Right cardiac atrium (tissue), 5 donors: ENCODE measurements at regions of chr1 and their contacts with region 1.

Region 1: DNA sequence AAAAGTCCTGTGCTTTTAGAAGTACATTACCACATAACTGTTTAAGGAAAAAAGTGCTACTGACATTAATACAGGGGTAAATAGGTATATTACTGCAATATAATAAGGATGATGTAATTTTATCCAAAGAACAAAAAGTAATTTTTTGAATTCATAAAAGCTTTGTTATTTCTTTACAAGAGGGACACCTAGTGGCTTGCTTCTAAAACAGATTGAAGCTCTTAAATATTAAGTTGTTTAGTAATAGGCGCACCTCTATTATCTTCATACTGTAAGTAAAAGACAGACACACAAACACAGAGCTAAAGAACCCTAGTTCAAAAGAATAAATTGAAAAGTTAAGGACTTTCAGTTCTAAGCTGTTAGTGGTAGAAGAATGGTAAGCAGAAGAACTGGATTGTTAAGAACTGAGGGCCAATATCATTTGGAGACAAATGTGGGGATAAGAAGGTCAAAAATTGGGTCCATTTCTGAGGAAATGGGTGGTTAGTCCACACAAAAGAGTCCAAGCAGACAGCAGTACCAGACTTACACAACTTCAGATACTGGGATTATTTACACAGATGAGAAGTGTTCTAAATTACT is 15.4 kb downstream of the ZNHIT6 start:
- DNase-seq: no peak
- ATAC-seq: no peak
- H3K4me3 ChIP-seq: no peak overlapping the region
- H3K27ac ChIP-seq: no peak overlapping the region
- H3K4me1 ChIP-seq: no peaks in the 10 kb centered on the region
- H3K27me3 ChIP-seq: no peaks in the 10 kb centered on the region

Region 2: DNA sequence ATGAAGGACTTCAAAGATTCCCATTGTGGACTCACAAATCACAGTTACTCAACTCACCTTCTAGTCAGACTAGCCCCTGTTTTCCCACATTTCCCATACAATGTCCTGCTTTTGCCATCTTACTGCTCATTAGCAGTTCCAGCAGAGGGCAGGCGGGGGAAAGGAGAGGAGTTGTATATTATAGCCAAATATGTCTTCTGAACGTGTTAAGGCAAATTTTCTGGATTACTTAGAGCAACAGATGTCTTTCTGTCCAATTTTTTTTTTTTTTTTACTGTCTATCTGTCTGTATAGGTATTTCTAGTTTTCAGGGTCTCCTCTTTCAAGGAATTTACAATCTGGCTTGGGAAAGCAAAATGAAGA is 197.9 kb before region 1 on chr1:
- intact Hi-C with region 1: loop called in 2 of 4 experiments (anchors 10 kb)
- DNase-seq: peak in 1 of 3 donors; percentile 45
- ATAC-seq: no peak
- H3K4me3 ChIP-seq: no peak overlapping the region
- H3K27ac ChIP-seq: no peak overlapping the region
- H3K4me1 ChIP-seq: no peaks in the 10 kb centered on the region
- H3K27me3 ChIP-seq: no peaks in the 10 kb centered on the region

Region 3: DNA sequence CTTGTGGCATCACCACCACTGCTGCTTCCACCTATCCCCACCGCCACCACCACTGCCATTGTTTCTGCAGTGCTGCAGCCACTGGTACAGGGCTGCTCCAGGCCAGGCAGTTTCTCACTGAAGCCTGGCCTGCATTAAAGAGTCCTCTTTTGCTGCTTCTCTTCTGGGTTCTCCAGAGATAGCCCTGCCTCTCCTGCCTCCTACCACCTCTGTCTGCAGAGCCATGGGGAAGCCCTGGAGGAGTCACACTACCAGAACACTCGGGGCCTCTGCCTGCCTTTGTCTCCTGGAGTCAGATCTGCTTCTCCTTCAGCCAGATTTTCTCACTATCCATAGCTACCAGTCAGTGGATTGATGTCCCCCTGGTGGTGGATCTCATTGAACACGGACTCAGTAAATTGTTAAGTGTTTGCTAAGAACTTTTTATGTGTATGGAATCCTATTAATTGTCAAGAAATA is 190.2 kb before region 1 on chr1:
- intact Hi-C with region 1: loop called in 2 of 4 experiments (anchors 10 kb)
- DNase-seq: peak in 2 of 3 donors; percentile 25 to 60
- ATAC-seq: peak; percentile 81 to 90
- H3K4me3 ChIP-seq: no peak overlapping the region
- H3K27ac ChIP-seq: no peak overlapping the region
- H3K4me1 ChIP-seq: no peaks in the 10 kb centered on the region
- H3K27me3 ChIP-seq: no peaks in the 10 kb centered on the region

Region 4: DNA sequence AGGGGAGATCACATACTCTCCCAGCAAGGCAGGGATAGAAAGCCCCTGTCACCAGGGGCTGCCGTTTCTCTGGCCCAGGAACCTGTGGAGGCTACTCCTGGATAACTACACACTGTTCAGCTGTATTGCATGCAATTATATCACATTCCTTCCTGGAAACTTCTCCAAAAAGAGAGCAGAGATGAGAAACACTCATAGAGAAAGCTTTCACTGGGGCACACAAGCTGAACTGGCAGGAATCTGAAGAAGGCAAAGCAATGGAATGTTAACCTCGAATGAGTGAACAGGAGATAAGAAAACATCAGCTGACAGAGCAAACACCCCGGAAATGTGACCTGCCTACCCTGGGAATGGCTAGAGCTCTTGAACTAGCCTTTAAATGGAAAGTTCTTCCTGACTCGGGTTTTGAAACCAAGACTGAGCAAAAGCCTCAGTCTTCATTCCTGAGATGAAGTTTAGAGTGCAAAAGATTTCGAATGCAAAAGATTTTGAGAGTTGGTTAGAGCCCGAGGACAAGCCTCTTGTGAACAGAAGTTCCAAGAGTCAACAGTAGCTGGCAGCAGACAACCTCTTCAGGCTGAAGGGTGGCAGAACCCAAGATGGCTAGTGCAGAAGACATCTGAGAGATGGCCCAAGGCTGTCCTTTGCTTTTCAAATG is 80.0 kb before region 1 on chr1:
- intact Hi-C with region 1: no loop called
- DNase-seq: no peak
- ATAC-seq: peak; percentile 37 to 59
- H3K4me3 ChIP-seq: no peak overlapping the region
- H3K27ac ChIP-seq: peak overlapping the region; percentile 68
- H3K4me1 ChIP-seq: no peaks in the 10 kb centered on the region
- H3K27me3 ChIP-seq: no peaks in the 10 kb centered on the region

Region 5: GRCh38 chr1:85650645-85651044 is 42.2 kb before region 1 on chr1:
- intact Hi-C with region 1: no loop called
- DNase-seq: no peak
- ATAC-seq: no peak
- H3K4me3 ChIP-seq: no peak overlapping the region
- H3K27ac ChIP-seq: no peak overlapping the region
- H3K4me1 ChIP-seq: no peaks in the 10 kb centered on the region
- H3K27me3 ChIP-seq: no peaks in the 10 kb centered on the region